SK-N-SH (cell line): ENCODE measurements at regions of chr21 and their contacts with region 1.

Region 1: GRCh38 chr21:45130324-45130774 is 56.0 kb downstream of the ADARB1 start:
- DNase-seq: no peak
- H3K4me3 ChIP-seq: peak overlapping the region; percentile 30 to 58; a peak in 3 of 4 replicates
- H3K27ac ChIP-seq: peak overlapping the region; percentile 62 to 74; a peak in 3 of 4 replicates
- H3K4me1 ChIP-seq: peaks cover 8 to 22% of the 10 kb centered on the region in 2 experiments
- H3K27me3 ChIP-seq: no peaks in the 10 kb centered on the region
- CTCF ChIP-seq: no peak
- EP300 ChIP-seq: no peak
- RAD21 ChIP-seq: no peak

Region 2: DNA sequence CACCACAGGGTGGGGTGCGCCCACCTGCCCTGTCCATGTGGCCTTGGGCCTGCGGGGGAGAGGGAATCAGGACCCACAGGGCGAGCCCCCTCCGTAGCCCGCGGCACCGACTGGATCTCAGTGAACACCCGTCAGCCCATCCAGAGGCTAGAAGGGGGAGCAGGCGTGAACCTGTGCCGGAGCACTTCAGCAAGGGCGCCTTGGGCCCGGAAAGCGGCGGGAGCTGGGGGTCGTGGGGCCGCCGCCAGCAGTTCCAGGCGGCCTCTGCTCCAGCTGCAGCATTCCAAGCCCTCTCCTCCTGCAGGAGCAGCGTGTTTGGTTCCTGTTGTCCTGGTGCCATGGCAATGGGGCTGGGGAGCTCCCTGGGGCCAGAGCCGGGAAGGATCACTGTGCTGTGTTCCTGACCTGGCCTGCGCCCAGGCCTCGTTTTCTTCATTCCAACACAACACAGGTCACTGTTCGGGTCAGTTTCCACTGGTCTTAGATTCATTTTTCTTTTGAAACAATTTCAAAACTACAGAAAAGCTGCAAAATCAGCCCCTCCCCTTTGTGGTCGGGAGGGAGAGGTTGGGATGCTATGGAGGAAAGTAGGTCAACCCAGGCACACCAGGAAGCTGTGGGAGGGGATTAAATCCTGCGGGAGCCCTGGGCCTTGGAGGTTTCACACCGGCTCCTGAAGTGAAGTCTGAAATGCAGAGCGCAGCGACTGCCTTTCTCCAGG is 171.7 kb before region 1 on chr21:
- CTCF ChIA-PET with region 1: interaction called, 357 read pairs
- POLR2A ChIA-PET with region 1: no interaction called
- DNase-seq: peak; percentile 80
- H3K4me3 ChIP-seq: no peak overlapping the region
- H3K27ac ChIP-seq: peak overlapping the region; percentile 20 to 35; a peak in 3 of 4 replicates
- H3K4me1 ChIP-seq: peaks cover 9 to 17% of the 10 kb centered on the region in 2 experiments; a peak in 3 of 4 replicates
- H3K27me3 ChIP-seq: no peaks in the 10 kb centered on the region
- CTCF ChIP-seq: no peak
- EP300 ChIP-seq: no peak
- RAD21 ChIP-seq: no peak; the same call in 1 of the 2 replicates

Region 3: DNA sequence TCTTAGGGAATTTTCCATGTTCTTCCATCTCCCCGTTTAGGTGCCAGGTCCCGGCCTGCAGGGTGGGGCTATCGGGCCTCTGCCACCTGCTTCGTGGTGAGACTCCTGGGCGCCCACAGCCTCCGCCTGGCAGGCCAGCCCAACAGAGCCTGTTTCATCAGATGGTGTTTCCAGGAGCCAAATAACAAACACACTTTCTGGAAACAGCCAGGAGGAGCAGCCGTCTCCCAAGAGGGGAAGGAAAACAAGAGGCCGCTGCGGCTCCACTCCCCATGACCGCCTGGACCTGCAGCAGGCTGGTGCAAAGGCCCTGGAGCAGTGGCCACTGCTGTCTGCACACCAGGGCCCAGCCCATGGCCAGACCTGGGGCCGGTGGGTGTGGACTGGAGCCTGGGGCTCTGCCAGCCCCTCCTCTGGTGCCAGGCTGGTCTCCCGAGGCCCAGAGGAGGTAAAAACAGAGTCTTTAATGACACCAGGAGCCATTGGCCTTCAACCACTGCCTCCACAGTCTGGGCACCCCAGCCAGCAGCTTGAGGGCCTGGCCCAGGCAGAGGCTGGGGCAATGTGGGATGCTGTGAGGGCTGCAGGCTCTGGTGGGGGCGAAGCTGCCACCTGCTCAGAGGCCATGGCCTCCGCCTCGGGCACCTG is 135.5 kb before region 1 on chr21:
- CTCF ChIA-PET with region 1: interaction called, 26 read pairs
- POLR2A ChIA-PET with region 1: no interaction called
- DNase-seq: no peak
- H3K4me3 ChIP-seq: no peak overlapping the region
- H3K27ac ChIP-seq: no peak overlapping the region; a peak in 1 of 4 replicates
- H3K4me1 ChIP-seq: peaks cover 0 to 48% of the 10 kb centered on the region in 2 experiments; a peak in 1 of 4 replicates
- H3K27me3 ChIP-seq: no peaks in the 10 kb centered on the region
- CTCF ChIP-seq: no peak
- EP300 ChIP-seq: no peak
- RAD21 ChIP-seq: no peak

Region 4: DNA sequence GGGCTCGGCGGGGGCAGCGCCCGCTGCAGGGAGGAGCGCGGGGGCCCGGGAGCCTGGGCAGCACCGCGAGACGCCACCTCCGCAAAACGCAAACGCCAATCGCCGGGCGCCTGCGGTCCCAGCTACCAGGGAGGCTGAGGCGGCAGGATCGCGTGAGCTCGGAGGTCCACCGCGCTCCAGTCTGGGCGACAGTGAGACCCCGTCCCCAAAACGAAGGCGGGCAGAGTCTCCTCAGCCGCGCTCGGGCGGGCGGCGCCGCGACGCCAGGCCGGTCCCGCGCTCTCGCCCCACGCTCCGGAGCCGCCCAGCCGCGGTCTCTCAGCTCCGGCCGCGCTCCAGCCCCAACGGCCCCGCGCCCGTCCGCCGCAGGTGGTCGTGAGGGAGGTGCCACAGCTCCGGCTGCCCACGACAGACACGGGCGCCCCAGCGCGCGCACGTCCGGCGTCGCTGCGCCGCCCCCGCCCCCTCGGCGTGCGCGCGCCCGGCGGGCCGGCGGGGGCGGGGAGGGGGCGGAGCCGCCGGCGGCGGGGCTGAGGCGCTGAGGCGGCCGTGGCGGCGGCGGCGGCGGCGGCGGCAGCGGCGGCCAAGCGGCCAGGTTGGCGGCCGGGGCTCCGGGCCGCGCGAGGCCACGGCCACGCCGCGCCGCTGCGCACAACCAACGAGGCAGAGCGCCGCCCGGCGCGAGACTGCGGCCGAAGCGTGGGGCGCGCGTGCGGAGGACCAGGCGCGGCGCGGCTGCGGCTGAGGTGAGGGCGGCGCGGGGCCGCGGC is 56.1 kb before region 1 on chr21 and contains the start of gene ADARB1:
- CTCF ChIA-PET with region 1: interaction called, 32 read pairs
- POLR2A ChIA-PET with region 1: no interaction called
- DNase-seq: peak; percentile 98
- H3K4me3 ChIP-seq: peak within 1 kb of the TSS; percentile 80 to 93
- H3K27ac ChIP-seq: peak within 1 kb of the TSS; percentile 52 to 86; a peak in 3 of 4 replicates
- H3K4me1 ChIP-seq: peaks cover 10 to 25% of the 10 kb centered on the region in 2 experiments; a peak in 3 of 4 replicates
- H3K27me3 ChIP-seq: no peaks in the 10 kb centered on the region
- CTCF ChIP-seq: no peak
- EP300 ChIP-seq: no peak
- RAD21 ChIP-seq: no peak
- polyA plus RNA-seq, gene ADARB1: 7.6 and 7.8 TPM in 2 replicates

Region 5: GRCh38 chr21:45114072-45114471 is 16.3 kb before region 1 on chr21:
- CTCF ChIA-PET with region 1: interaction called, 19 read pairs
- POLR2A ChIA-PET with region 1: no interaction called
- DNase-seq: no peak
- H3K4me3 ChIP-seq: no peak overlapping the region
- H3K27ac ChIP-seq: no peak overlapping the region
- H3K4me1 ChIP-seq: peaks cover 0 to 15% of the 10 kb centered on the region in 2 experiments; a peak in 1 of 4 replicates
- H3K27me3 ChIP-seq: no peaks in the 10 kb centered on the region
- CTCF ChIP-seq: no peak
- EP300 ChIP-seq: no peak
- RAD21 ChIP-seq: no peak

Region 6: DNA sequence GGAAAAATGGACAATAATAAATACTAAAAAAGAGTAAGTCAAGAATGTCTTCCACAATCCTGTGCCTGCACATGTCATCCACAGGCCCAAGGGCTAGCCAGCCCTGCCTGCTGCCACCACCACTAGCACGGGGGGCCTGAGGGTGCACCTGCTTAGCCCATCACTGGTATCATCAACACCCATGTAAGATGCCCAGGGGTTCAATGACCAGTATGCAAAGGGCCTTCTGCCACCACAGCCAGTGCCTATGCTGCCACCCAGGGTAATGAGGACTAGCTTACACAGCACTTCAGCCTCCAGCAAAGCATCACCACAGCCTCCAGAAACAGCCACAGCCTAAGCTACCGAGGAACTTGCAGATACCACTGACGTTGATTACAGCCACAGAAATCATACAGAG is 111.0 kb after region 1 on chr21:
- CTCF ChIA-PET with region 1: no interaction called
- POLR2A ChIA-PET with region 1: no interaction called
- DNase-seq: no peak
- H3K4me3 ChIP-seq: no peak overlapping the region
- H3K27ac ChIP-seq: no peak overlapping the region
- H3K4me1 ChIP-seq: peaks cover 0 to under 1% of the 10 kb centered on the region in 2 experiments; a peak in 1 of 4 replicates
- H3K27me3 ChIP-seq: no peaks in the 10 kb centered on the region
- CTCF ChIP-seq: no peak
- EP300 ChIP-seq: no peak
- RAD21 ChIP-seq: no peak

Region 7: DNA sequence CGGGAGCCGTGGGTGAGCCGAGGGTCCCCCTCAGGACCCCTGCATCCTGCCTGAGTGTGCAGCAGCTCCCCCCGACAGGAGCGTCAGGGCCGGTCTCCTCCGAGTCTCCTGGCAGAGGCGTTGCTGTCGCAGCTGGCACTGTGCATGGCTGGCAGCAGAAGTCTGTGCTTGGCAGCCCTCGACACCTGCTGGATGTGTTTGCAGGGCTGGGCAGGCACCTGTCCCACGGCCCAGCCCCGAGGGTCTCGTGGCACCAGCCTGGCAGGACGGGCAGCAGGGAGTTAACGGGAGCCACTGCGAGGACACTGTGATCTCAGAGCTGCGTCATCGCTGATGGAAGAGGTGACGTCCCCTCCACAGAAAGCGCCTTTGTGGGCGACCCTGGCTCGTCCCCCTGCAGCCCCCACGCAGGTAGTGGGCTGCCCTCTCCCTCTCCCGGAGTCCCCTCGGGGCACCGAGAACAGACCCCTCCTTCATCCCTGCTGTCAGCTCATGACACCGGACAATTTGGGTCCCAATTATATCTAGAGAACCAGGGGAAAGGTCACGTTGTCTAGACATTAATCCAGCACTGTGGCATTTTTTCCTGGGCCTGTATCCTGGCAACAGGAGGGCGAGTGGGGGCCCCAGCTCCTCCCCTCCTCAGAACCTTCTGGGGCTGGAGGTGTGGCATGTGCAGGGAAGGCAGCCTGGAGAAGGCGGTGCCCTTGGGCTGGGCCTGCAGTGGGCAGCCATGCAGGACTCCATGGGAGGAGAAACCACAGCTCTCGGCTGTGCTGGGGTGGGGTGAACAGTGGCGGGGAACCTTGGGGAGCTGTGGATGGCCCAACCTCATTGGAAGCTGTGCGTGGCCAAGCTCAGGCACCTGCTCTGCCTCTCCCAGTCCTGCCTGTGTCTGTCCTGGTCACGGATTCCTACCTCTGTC is 290.0 kb after region 1 on chr21:
- CTCF ChIA-PET with region 1: no interaction called
- POLR2A ChIA-PET with region 1: no interaction called
- DNase-seq: peak; percentile 65
- H3K4me3 ChIP-seq: no peak overlapping the region
- H3K27ac ChIP-seq: no peak overlapping the region; a peak in 1 of 4 replicates
- H3K4me1 ChIP-seq: peaks cover 0 to 21% of the 10 kb centered on the region in 2 experiments; a peak in 2 of 4 replicates
- H3K27me3 ChIP-seq: no peaks in the 10 kb centered on the region
- CTCF ChIP-seq: no peak
- EP300 ChIP-seq: no peak
- RAD21 ChIP-seq: no peak